ENCODE measurements at regions of chr7 and their contacts with region 1.

Region 1: GRCh38 chr7:92461027-92462003 is 14.0 kb downstream of the GATAD1 start:
- DNase-seq: peak; percentile 53 to 75 (median 65)
- ATAC-seq: peak; percentile 93
- H3K4me3 ChIP-seq: no peak overlapping the region
- H3K27ac ChIP-seq: peak overlapping the region; percentile 22; the same call in 2 of the 3 replicates
- H3K4me1 ChIP-seq: peaks cover 0 to 4% of the 10 kb centered on the region in 2 experiments; a peak in 2 of 5 replicates
- H3K27me3 ChIP-seq: no peaks in the 10 kb centered on the region
- CTCF ChIP-seq: peak; percentile 72 to 92 (median 92)
- EP300 ChIP-seq: no peak
- POLR2A ChIP-seq: no peak
- RAD21 ChIP-seq: peak; percentile 48 to 69

Region 2: DNA sequence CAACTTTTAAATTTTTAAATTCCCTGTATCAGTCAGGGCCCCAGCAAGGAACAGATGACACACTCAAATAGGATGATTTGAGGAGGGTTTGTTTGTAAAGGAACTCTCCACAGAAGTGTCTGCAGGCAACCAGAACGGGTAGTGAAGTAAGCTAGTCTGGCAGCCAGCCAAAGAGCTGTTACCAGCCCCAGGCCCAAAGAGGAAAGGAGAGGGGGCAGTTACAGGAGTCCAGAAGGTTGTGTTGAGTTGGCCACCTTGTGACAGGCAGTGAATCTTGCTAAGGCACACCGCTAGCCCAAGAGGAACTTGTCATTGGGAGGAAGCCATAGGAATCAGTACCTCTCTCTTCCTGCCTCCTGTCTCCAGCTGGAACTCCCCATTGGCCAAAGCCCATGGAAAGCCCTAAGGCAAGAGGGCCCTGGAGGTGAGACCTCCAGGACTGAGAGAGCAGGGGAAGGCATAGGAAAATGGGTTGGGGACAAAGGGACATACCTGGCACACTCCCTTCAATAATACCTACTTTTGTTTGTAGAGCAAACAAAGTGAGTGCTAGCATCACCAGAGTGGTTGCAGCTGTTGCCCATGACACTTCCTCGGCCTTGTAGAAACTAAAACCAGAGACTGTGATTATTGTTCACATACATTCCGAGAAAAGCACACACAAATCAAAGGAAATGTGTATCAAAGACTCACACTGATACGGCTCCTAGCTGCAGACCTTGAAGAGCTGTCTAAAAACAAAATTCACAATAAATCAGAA is 39.5 kb before region 1 on chr7:
- CTCF ChIA-PET with region 1: no interaction called
- POLR2A ChIA-PET with region 1: no interaction called
- in situ Hi-C with region 1: no loop called
- intact Hi-C with region 1: loop called (anchors 1 kb)
- DNase-seq: peak in 3 of 4 experiments; percentile 26 to 59 (median 33)
- ATAC-seq: no peak
- H3K4me3 ChIP-seq: no peak overlapping the region
- H3K27ac ChIP-seq: no peak overlapping the region
- H3K4me1 ChIP-seq: peaks cover 14 to 20% of the 10 kb centered on the region in 2 experiments
- H3K27me3 ChIP-seq: no peaks in the 10 kb centered on the region
- CTCF ChIP-seq: no peak
- EP300 ChIP-seq: no peak
- POLR2A ChIP-seq: no peak
- RAD21 ChIP-seq: no peak

Measured in K562 (cell line).